Activated T-helper 2 cell treated with anti-CD3 and anti-CD28 coated beads, Interferon-gamma antibody, Interleukin-2, Interleukin-4, amounts not matched to agents 10 μg/mL and 5 μg/mL and 100 μg/mL, durations not matched to agents 14 hours and 24 hours and 36 hours (primary cell): ENCODE measurements at regions of chr9 and their contacts with region 1.

Region 1: GRCh38 chr9:94839398-94839797 is 112.9 kb downstream of the AOPEP start:
- DNase-seq: no peak
- H3K4me3 Mint-ChIP-seq: no peak overlapping the region
- H3K27ac Mint-ChIP-seq: no peak overlapping the region
- H3K4me1 Mint-ChIP-seq: peaks cover 23% of the 10 kb centered on the region
- H3K27me3 Mint-ChIP-seq: no peaks in the 10 kb centered on the region

Region 2: GRCh38 chr9:94726495-94727191 is 112.8 kb before region 1 on chr9 and contains the start of gene AOPEP:
- intact Hi-C with region 1: no loop called
- DNase-seq: peak; percentile 98
- H3K4me3 Mint-ChIP-seq: peak within 1 kb of the TSS; percentile 91
- H3K27ac Mint-ChIP-seq: peak within 1 kb of the TSS; percentile 94
- H3K4me1 Mint-ChIP-seq: peaks cover 15% of the 10 kb centered on the region
- H3K27me3 Mint-ChIP-seq: no peaks in the 10 kb centered on the region
- total RNA-seq, gene AOPEP: 24.6 and 27.6 TPM in 2 replicates

Region 3: GRCh38 chr9:94802793-94803192 is 36.6 kb before region 1 on chr9:
- intact Hi-C with region 1: loop called (anchors 1 kb)
- DNase-seq: no peak
- H3K4me3 Mint-ChIP-seq: no peak overlapping the region
- H3K27ac Mint-ChIP-seq: no peak overlapping the region
- H3K4me1 Mint-ChIP-seq: peaks cover 22% of the 10 kb centered on the region
- H3K27me3 Mint-ChIP-seq: peaks cover 2% of the 10 kb centered on the region

Region 4: DNA sequence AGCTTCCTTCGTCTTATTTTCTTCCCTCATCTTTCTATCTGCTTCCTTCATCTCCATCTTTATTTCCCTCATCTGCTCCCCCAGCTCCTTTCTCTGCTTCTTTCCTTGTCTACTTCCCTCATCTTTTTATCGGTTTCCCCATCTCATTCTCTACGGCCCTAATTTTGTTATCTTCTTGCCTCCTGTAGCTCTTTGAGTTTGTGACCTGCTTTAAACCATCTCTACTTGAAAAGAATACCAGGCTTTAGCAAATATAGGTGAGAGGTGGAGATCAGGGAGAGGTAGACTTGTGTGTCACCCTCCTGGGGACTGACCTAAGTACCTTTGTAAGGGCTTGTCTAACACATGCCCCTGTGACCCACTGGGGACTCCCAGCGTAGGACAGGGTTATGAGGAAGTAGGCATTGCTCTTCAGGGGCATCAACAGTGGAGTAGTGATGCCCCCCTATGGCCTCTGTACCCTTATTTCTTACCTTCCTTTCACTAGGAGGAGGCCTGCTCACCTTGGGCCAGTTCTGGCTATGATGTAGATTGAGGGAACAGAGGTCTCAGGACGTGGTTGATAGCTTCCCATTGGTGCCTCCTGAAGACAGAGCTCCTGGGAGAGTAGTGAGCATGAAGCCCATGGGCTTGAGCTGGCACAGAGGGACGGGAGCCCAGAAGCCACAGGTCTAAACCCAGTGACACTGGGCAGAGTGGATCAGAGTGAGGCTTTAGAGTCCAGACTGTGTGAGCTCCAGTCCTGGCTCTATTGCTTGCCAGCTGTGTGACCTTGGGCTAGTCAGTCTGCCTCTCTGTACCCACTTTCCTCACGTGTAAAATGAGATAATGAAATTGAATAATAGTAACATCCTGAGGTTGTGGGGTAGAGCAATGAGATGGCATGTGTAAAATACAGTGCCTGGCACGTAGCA is 78.7 kb after region 1 on chr9:
- intact Hi-C with region 1: no loop called
- DNase-seq: no peak
- H3K4me3 Mint-ChIP-seq: no peak overlapping the region
- H3K27ac Mint-ChIP-seq: no peak overlapping the region
- H3K4me1 Mint-ChIP-seq: no peaks in the 10 kb centered on the region
- H3K27me3 Mint-ChIP-seq: peaks cover 2% of the 10 kb centered on the region

Region 5: DNA sequence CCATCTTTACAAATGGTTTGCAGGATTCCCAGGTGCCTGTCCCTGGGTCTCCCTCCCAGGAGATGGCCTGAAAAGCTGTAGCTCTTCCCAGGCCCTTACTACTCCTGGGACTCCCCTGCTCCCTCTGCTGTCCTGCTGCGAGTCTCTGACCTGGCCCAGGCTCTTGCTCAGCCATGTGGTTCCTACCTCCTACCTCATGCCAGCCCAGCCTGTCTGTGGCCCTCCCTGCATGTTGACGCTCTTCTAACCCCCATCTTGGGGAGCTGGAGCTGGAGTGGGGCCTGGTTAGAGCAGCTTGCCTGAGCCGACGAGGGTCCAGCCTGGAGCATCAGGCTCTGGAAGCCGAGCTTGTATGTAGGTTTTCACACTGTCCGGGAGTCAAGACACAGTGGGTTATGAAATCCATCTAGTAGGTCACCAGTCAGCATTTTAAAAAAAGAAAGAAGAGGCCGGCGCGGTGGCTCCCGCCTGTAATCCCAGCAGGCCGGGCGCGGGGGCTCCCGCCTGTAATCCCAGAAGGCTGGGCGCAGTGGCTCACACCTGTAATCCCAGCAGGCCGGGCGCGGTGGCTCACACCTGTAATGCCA is 233.7 kb after region 1 on chr9:
- intact Hi-C with region 1: no loop called
- DNase-seq: no peak
- H3K4me3 Mint-ChIP-seq: no peak overlapping the region
- H3K27ac Mint-ChIP-seq: no peak overlapping the region
- H3K4me1 Mint-ChIP-seq: no peaks in the 10 kb centered on the region
- H3K27me3 Mint-ChIP-seq: no peaks in the 10 kb centered on the region